ENCODE measurements at regions of chr2 and their contacts with region 1.

Region 1: DNA sequence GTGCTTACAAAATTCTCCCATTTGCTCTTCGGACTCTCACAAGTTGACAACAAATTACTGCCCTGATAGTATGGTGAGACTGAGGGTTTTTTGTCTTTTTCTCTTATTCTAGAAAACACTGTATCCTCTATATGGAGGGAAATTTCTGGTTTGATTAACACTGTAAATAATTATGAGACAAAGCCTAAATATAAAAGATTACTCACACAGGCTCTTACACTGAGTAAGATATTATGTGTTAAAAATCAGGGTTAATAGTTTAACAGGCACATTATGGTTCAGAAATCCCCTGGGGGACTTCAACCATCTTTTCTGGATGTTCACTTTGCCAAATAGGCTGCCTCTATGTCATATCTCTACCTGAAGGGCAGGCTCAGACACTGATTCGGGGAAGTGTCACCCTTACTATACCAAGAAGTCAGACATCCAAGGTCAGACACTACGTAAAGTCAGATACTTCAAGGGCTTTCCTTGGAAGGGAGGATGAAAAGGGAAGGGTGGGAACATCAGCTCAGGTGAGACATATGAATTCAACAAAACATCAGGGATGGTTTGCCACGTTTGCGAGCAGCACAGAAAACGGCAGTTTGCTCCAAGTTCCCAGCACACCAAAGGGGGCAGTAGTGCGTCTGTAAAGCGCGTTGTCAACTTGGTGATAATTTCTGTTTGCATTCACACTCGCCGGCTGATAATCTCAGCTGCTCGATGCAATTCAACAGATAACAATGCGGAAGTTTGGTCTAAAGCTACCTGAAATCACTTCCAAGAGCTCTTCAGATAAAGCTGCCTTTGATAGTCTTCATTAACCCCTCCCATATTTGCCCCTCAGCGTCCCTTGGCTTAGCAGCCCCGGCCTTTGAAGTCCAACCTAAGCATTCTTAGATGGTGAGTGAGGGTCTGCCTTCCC is 972 bp upstream of the RASGRP3 start:
- DNase-seq: peak; percentile 81 to 86
- ATAC-seq: peak; percentile 89

Region 2: GRCh38 chr2:33577668-33578067 is 102.2 kb after region 1 on chr2:
- intact Hi-C with region 1: loop called in 1 of 2 experiments (anchors 10 kb)
- DNase-seq: no peak
- ATAC-seq: no peak

Measured in left colon (tissue), 2 donors.